Activated CD4-positive, alpha-beta T cell treated with anti-CD3 and anti-CD28 coated beads, Interleukin-2, amount 10 ng/mL, durations not matched to agents 7 days and 5 days (primary cell): ENCODE measurements at regions of chr6 and their contacts with region 1.

Region 1: DNA sequence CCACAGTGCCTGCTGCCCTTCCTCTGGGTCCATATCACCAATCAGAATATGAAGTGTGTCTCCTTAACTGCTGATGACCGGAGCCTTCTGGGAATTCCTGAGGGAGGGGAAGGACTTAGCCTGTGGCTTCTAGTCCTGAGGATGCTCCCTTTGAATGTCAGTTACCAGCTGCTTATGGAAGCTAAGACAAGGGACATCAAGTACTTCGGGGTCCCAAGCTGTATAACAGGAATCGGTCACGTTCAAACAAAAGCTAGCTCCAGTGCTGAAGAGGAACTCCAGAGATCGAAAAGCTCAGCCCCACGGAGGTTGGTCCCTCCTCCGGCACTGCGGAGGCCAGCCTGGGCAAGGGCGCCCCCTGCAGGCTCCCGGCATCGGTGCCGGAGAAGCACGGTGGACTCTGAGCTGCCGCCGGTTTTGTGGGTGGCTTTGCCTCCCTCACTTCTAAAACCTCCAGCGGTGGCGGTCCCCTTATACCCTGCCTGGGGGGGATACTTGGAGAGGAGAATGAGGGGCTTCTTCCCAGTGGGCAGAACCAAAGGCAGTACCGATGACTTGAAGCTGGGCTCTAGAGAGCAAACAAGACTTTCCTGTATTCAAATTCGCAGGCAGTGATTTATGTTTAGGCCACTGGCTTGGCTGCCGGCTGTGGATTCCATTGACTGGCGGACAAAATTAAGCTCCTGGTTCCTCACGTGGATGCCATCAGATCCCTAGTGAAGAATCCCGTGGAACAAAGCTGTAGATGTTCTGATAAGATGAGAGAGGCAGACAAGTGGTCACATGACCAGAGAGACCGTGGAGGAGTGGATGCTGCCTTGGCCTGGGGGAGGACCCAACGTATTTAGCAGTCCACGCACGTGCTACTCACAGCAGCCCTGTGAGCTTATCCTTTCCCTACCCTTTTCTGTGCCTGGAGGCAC is 16.2 kb upstream of the UBR2 start:
- DNase-seq: peak; percentile 87
- H3K4me3 Mint-ChIP-seq: peak overlapping the region; percentile 63
- H3K27ac Mint-ChIP-seq: peak overlapping the region; percentile 78
- H3K4me1 Mint-ChIP-seq: peaks cover 19% of the 10 kb centered on the region
- H3K27me3 Mint-ChIP-seq: peaks cover 5% of the 10 kb centered on the region

Region 2: DNA sequence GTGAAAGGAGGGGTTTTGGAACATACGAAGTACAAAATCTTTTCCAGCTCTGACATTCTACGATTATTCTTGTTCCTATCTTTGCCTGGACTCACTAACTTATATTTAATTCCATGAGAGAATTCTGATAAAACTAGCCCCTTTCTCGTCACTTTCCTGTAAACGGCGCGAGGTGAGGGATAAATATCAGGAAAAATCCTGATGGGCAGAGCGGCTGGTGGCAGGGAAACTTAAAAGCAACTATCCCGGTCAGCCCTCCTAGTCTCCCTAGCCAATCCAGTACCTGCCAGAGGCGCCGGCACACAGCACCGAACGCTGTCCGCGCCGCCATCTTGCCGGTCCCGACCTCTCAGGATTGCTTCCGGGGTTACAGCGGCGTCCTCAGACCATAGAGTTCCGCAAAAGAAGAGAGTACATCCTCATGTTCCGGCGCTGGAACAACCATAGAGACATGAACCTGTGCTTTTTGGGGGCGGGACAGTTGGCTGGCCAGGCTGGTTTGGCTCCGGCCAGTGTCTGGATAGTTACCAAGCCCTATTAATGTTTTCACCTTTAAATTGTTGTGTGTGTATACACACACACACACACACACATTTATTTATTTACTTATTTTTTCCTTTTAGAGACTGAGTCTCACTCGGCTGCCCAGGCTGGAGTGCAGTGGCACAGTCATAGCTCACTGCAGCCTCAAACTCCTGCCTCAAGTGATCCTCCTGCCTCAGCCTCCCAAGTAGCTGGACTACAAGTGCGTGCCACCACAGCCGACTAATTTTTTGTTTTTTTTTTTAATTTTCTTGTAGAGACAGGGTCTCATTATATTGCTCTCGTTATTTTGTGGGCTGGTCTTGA is 329.9 kb before region 1 on chr6 and contains the start of gene MRPS10:
- CTCF ChIA-PET with region 1: interaction called, 13 read pairs
- POLR2A ChIA-PET with region 1: no interaction called
- DNase-seq: peak; percentile 94
- H3K4me3 Mint-ChIP-seq: peak within 1 kb of the TSS; percentile 99
- H3K27ac Mint-ChIP-seq: peak within 1 kb of the TSS; percentile 94
- H3K4me1 Mint-ChIP-seq: peaks cover 31% of the 10 kb centered on the region
- H3K27me3 Mint-ChIP-seq: no peaks in the 10 kb centered on the region
- total RNA-seq, gene MRPS10: 27.9 to 33.1 TPM

Region 3: GRCh38 chr6:42304053-42304712 is 243.5 kb before region 1 on chr6:
- CTCF ChIA-PET with region 1: interaction called, 11 read pairs
- POLR2A ChIA-PET with region 1: no interaction called
- DNase-seq: no peak
- H3K4me3 Mint-ChIP-seq: no peak overlapping the region
- H3K27ac Mint-ChIP-seq: no peak overlapping the region
- H3K4me1 Mint-ChIP-seq: no peaks in the 10 kb centered on the region
- H3K27me3 Mint-ChIP-seq: no peaks in the 10 kb centered on the region

Region 4: GRCh38 chr6:42453031-42453653 is 94.5 kb before region 1 on chr6:
- CTCF ChIA-PET with region 1: interaction called, 11 read pairs
- POLR2A ChIA-PET with region 1: no interaction called
- DNase-seq: peak; percentile 83
- H3K4me3 Mint-ChIP-seq: peak overlapping the region; percentile 92
- H3K27ac Mint-ChIP-seq: no peak overlapping the region
- H3K4me1 Mint-ChIP-seq: peaks cover 32% of the 10 kb centered on the region
- H3K27me3 Mint-ChIP-seq: peaks cover 14% of the 10 kb centered on the region

Region 5: GRCh38 chr6:42537536-42537935 is 10.1 kb before region 1 on chr6:
- CTCF ChIA-PET with region 1: interaction called, 30 read pairs
- POLR2A ChIA-PET with region 1: no interaction called
- DNase-seq: no peak
- H3K4me3 Mint-ChIP-seq: no peak overlapping the region
- H3K27ac Mint-ChIP-seq: no peak overlapping the region
- H3K4me1 Mint-ChIP-seq: no peaks in the 10 kb centered on the region
- H3K27me3 Mint-ChIP-seq: peaks cover 8% of the 10 kb centered on the region